ENCODE measurements at regions of chr6 and their contacts with region 1.

Region 1: GRCh38 chr6:31546962-31547726 is at the start of gene NFKBIL1:
- DNase-seq: peak; percentile 78 to 97 (median 89)
- ATAC-seq: peak; percentile 80
- H3K4me3 ChIP-seq: peak within 1 kb of the TSS; percentile 53 to 54
- H3K4me3 Mint-ChIP-seq: peak within 1 kb of the TSS; percentile 79
- H3K27ac ChIP-seq: peak within 1 kb of the TSS; percentile 55 to 89
- H3K27ac Mint-ChIP-seq: peak within 1 kb of the TSS; percentile 90
- H3K4me1 ChIP-seq: peaks cover 31% of the 10 kb centered on the region
- H3K4me1 Mint-ChIP-seq: peaks cover 46% of the 10 kb centered on the region
- H3K27me3 ChIP-seq: no peaks in the 10 kb centered on the region
- H3K27me3 Mint-ChIP-seq: no peaks in the 10 kb centered on the region
- CTCF ChIP-seq: peak; percentile 40
- total RNA-seq, gene NFKBIL1: 6.1 to 7.0 TPM

Region 2: GRCh38 chr6:31559958-31560696 is 13.0 kb after region 1 on chr6:
- CTCF ChIA-PET with region 1: interaction called, 9 read pairs
- POLR2A ChIA-PET with region 1: no interaction called
- intact Hi-C with region 1: loop called in 1 of 2 experiments (anchors 1 kb)
- DNase-seq: peak in 7 of 9 experiments; percentile 36 to 80 (median 59)
- ATAC-seq: peak; percentile 54
- H3K4me3 ChIP-seq: peak overlapping the region; percentile 4 to 13
- H3K4me3 Mint-ChIP-seq: peak overlapping the region; percentile 80
- H3K27ac ChIP-seq: peak overlapping the region in 1 of 2 experiments; percentile 78
- H3K27ac Mint-ChIP-seq: peak overlapping the region; percentile 90
- H3K4me1 ChIP-seq: peaks cover 52% of the 10 kb centered on the region
- H3K4me1 Mint-ChIP-seq: peaks cover 62% of the 10 kb centered on the region
- H3K27me3 ChIP-seq: no peaks in the 10 kb centered on the region
- H3K27me3 Mint-ChIP-seq: no peaks in the 10 kb centered on the region
- CTCF ChIP-seq: no peak

Region 3: GRCh38 chr6:31575335-31575901 is 28.3 kb after region 1 on chr6 and contains the start of gene TNF:
- CTCF ChIA-PET with region 1: interaction called, 448 read pairs
- POLR2A ChIA-PET with region 1: interaction called, 29 read pairs
- intact Hi-C with region 1: loop called (anchors 1 kb)
- DNase-seq: peak in 8 of 9 experiments; percentile 45 to 84 (median 64)
- ATAC-seq: peak; percentile 6
- H3K4me3 ChIP-seq: peak within 1 kb of the TSS; percentile 26 to 71
- H3K4me3 Mint-ChIP-seq: peak within 1 kb of the TSS; percentile 97
- H3K27ac ChIP-seq: peak within 1 kb of the TSS; percentile 57 to 94
- H3K27ac Mint-ChIP-seq: peak within 1 kb of the TSS; percentile 99
- H3K4me1 ChIP-seq: peaks cover 75% of the 10 kb centered on the region
- H3K4me1 Mint-ChIP-seq: peaks cover 88% of the 10 kb centered on the region
- H3K27me3 ChIP-seq: no peaks in the 10 kb centered on the region
- H3K27me3 Mint-ChIP-seq: no peaks in the 10 kb centered on the region
- CTCF ChIP-seq: no peak
- total RNA-seq, gene TNF: 30.1 to 32.7 TPM

Region 4: DNA sequence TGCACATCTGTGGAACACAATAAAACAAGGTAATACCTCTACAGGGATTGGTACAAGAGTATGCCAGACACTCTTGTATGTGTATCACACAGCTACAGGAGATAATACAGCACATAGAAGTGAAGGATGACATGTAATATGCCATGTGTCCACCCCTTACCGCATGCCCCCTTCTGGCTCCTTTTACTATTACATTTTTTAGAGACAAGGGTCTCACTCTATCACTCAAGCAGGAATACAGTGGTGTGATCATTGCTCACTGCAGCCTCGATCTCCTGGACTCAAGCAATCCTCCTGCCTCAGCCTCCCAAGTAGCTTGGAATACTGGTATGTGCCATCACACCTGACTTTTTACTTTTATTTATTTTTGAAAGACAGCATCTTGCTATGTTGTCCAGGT is 49.9 kb after region 1 on chr6:
- CTCF ChIA-PET with region 1: interaction called, 660 read pairs
- POLR2A ChIA-PET with region 1: interaction called, 31 read pairs
- intact Hi-C with region 1: loop called (anchors 1 kb)
- DNase-seq: peak in 5 of 9 experiments; percentile 47 to 86 (median 56)
- ATAC-seq: peak; percentile 83
- H3K4me3 ChIP-seq: no peak overlapping the region
- H3K4me3 Mint-ChIP-seq: peak overlapping the region; percentile 3
- H3K27ac ChIP-seq: no peak overlapping the region
- H3K27ac Mint-ChIP-seq: peak overlapping the region; percentile 79
- H3K4me1 ChIP-seq: peaks cover 53% of the 10 kb centered on the region
- H3K4me1 Mint-ChIP-seq: peaks cover 50% of the 10 kb centered on the region
- H3K27me3 ChIP-seq: no peaks in the 10 kb centered on the region
- H3K27me3 Mint-ChIP-seq: no peaks in the 10 kb centered on the region
- CTCF ChIP-seq: peak; percentile 66

Region 5: GRCh38 chr6:31652925-31653718 is 106.0 kb after region 1 on chr6:
- CTCF ChIA-PET with region 1: interaction called, 5 read pairs
- POLR2A ChIA-PET with region 1: interaction called, 3 read pairs
- intact Hi-C with region 1: loop called (anchors 1 kb)
- DNase-seq: peak in 4 of 9 experiments; percentile 77 to 92 (median 88)
- ATAC-seq: peak; percentile 70
- H3K4me3 ChIP-seq: peak overlapping the region; percentile 78 to 82
- H3K4me3 Mint-ChIP-seq: peak overlapping the region; percentile 92
- H3K27ac ChIP-seq: peak overlapping the region; percentile 94 to 96
- H3K27ac Mint-ChIP-seq: peak overlapping the region; percentile 100
- H3K4me1 ChIP-seq: peaks cover 32% of the 10 kb centered on the region
- H3K4me1 Mint-ChIP-seq: peaks cover 59% of the 10 kb centered on the region
- H3K27me3 ChIP-seq: no peaks in the 10 kb centered on the region
- H3K27me3 Mint-ChIP-seq: no peaks in the 10 kb centered on the region
- CTCF ChIP-seq: no peak

Region 6: GRCh38 chr6:31827286-31828079 is 280.3 kb after region 1 on chr6 and contains the start of gene HSPA1B:
- CTCF ChIA-PET with region 1: interaction called, 9 read pairs
- POLR2A ChIA-PET with region 1: no interaction called
- intact Hi-C with region 1: loop called (anchors 1 to 2 kb)
- DNase-seq: peak; percentile 56 to 91 (median 85)
- ATAC-seq: peak; percentile 63
- H3K4me3 ChIP-seq: peak within 1 kb of the TSS; percentile 60 to 95
- H3K4me3 Mint-ChIP-seq: peak within 1 kb of the TSS; percentile 96
- H3K27ac ChIP-seq: peak within 1 kb of the TSS; percentile 66 to 72
- H3K27ac Mint-ChIP-seq: peak within 1 kb of the TSS; percentile 94
- H3K4me1 ChIP-seq: peaks cover 25% of the 10 kb centered on the region
- H3K4me1 Mint-ChIP-seq: peaks cover 38% of the 10 kb centered on the region
- H3K27me3 ChIP-seq: no peaks in the 10 kb centered on the region
- H3K27me3 Mint-ChIP-seq: no peaks in the 10 kb centered on the region
- CTCF ChIP-seq: no peak
- total RNA-seq, gene HSPA1B: 4.9 to 5.2 TPM

Region 7: DNA sequence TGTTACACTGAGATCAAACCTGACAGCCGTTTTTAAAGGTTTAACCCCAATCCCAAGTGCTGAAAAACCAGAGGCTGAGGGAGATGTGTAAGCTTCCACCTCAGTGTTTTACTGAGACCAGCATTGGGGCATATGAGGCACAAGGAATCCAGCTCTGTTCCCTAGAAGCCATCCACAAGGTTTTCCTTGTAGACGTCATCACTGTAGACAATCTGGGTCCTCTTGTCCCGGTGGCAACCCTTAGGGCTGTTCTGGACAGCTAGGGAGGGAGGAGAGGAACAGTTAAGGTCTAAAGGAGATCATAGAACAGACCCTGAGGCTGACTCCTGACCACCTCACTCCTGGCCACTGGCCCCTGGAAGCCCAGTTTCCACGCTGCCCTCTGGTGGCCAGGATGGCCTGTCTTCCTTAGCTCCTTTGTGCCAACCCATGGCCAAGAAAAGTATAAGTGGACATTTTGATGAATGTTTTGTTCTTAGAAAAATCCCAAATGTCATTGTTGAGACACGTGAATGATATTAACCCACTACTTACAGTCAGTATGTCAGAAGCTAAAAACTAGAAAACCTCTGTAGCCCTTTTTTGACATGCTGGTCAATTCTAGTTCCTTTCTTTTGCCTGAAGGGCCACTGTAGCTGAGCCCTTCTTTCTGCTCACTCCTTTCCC is 405.1 kb after region 1 on chr6:
- CTCF ChIA-PET with region 1: no interaction called
- POLR2A ChIA-PET with region 1: no interaction called
- intact Hi-C with region 1: loop called in 1 of 2 experiments (anchors 2 kb)
- DNase-seq: peak in 5 of 9 experiments; percentile 33 to 56 (median 45)
- ATAC-seq: no peak
- H3K4me3 ChIP-seq: no peak overlapping the region
- H3K4me3 Mint-ChIP-seq: no peak overlapping the region
- H3K27ac ChIP-seq: peak overlapping the region in 1 of 2 experiments; percentile 25
- H3K27ac Mint-ChIP-seq: peak overlapping the region; percentile 60
- H3K4me1 ChIP-seq: peaks cover under 1% of the 10 kb centered on the region
- H3K4me1 Mint-ChIP-seq: peaks cover 1% of the 10 kb centered on the region
- H3K27me3 ChIP-seq: no peaks in the 10 kb centered on the region
- H3K27me3 Mint-ChIP-seq: no peaks in the 10 kb centered on the region
- CTCF ChIP-seq: peak; percentile 37

Measured in CD8-positive, alpha-beta T cell (primary cell).